A673 (cell line): ENCODE measurements at regions of chr12 and their contacts with region 1.

Region 1: GRCh38 chr12:66066137-66066928 is 64.2 kb downstream of the LLPH start:
- DNase-seq: peak; percentile 99
- H3K4me3 ChIP-seq: no peak overlapping the region
- H3K27ac ChIP-seq: peak overlapping the region; percentile 99
- H3K4me1 ChIP-seq: peaks cover 60% of the 10 kb centered on the region
- H3K27me3 ChIP-seq: no peaks in the 10 kb centered on the region
- CTCF ChIP-seq: peak; percentile 42

Region 2: DNA sequence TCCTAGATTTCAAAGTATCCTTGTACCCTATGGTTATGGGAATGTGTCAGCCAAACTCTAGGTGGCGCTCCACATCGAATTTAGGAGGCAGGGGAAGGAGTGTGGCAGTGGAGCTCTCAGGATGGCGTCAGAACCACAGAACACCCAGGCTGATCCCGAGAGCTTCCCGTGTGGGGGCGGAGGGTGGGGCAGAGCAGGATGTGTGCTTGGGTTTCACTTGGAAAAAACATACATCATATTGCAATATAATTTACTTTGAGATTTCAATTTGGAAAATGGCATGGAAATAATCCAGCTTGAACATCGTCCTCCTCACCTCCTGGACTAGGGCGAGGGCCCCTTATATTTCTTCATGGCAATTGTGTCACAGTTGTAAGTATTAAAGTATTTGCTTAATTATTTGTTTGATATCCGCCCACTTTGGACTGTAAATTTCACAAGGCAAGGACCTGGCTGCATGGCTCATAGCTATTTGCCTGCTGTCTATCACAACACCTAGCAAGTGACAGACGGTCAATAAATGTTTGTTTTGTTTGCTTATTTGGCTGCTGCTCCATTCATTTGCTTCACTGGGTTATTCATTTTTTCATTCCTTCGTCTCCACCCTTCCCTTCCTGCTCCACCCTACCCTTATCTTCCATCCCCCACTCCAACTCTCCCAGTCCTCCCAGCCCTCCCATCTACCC is 463.6 kb before region 1 on chr12:
- CTCF ChIA-PET with region 1: no interaction called
- POLR2A ChIA-PET with region 1: no interaction called
- intact Hi-C with region 1: loop called (anchors 2 kb)
- DNase-seq: peak; percentile 92
- H3K4me3 ChIP-seq: peak overlapping the region; percentile 36
- H3K27ac ChIP-seq: no peak overlapping the region
- H3K4me1 ChIP-seq: peaks cover 31% of the 10 kb centered on the region
- H3K27me3 ChIP-seq: no peaks in the 10 kb centered on the region
- CTCF ChIP-seq: peak; percentile 90

Region 3: GRCh38 chr12:65823513-65824375 is 242.6 kb before region 1 on chr12:
- CTCF ChIA-PET with region 1: interaction called, 5 read pairs
- POLR2A ChIA-PET with region 1: no interaction called
- intact Hi-C with region 1: loop called (anchors 5 kb)
- DNase-seq: peak; percentile 92
- H3K4me3 ChIP-seq: peak overlapping the region; percentile 85
- H3K27ac ChIP-seq: peak overlapping the region; percentile 95
- H3K4me1 ChIP-seq: peaks cover 18% of the 10 kb centered on the region
- H3K27me3 ChIP-seq: no peaks in the 10 kb centered on the region
- CTCF ChIP-seq: no peak

Region 4: DNA sequence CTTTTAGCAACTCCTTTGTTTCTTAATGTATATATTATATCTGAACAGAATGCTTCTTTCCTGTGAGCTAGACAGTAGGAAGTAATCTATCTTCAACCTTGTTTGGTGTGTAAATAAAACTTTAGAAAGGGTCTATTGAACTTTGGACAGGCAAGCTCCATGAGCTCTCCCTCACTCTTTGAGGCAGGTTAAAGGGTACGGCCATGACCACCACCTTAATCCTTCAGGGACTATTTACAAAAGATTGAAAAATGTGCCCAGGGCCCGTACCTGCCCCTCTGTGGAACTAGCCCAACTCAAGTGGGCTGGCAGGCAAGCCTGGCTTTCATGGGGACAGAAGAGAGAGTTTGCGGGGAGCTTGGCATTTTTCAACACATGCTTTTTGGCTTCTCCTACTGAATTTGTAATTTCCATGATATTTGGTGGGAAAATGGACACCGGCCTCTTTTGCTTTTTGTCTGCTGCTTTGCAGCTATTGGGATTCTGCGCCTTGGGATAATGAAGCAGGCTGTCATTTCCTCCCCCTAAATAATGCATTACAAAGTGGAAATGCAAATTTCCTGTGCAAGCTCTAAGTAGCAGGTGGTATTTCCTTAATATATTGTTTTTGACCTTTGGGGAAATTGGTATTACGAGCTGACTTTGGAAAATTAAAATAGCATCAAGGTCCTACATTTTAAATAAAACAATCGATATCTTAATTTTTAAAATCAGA is 136.1 kb before region 1 on chr12:
- CTCF ChIA-PET with region 1: no interaction called
- POLR2A ChIA-PET with region 1: interaction called, 3 read pairs
- intact Hi-C with region 1: loop called (anchors 2 kb)
- DNase-seq: peak; percentile 92
- H3K4me3 ChIP-seq: peak overlapping the region; percentile 13
- H3K27ac ChIP-seq: peak overlapping the region; percentile 95
- H3K4me1 ChIP-seq: peaks cover 94% of the 10 kb centered on the region
- H3K27me3 ChIP-seq: no peaks in the 10 kb centered on the region
- CTCF ChIP-seq: no peak

Region 5: GRCh38 chr12:65962921-65963861 is 103.1 kb before region 1 on chr12:
- CTCF ChIA-PET with region 1: interaction called, 3 read pairs
- POLR2A ChIA-PET with region 1: interaction called, 3 read pairs
- intact Hi-C with region 1: loop called (anchors 2 kb)
- DNase-seq: peak; percentile 70
- H3K4me3 ChIP-seq: no peak overlapping the region
- H3K27ac ChIP-seq: peak overlapping the region; percentile 52
- H3K4me1 ChIP-seq: peaks cover 59% of the 10 kb centered on the region
- H3K27me3 ChIP-seq: no peaks in the 10 kb centered on the region
- CTCF ChIP-seq: peak; percentile 64

Region 6: DNA sequence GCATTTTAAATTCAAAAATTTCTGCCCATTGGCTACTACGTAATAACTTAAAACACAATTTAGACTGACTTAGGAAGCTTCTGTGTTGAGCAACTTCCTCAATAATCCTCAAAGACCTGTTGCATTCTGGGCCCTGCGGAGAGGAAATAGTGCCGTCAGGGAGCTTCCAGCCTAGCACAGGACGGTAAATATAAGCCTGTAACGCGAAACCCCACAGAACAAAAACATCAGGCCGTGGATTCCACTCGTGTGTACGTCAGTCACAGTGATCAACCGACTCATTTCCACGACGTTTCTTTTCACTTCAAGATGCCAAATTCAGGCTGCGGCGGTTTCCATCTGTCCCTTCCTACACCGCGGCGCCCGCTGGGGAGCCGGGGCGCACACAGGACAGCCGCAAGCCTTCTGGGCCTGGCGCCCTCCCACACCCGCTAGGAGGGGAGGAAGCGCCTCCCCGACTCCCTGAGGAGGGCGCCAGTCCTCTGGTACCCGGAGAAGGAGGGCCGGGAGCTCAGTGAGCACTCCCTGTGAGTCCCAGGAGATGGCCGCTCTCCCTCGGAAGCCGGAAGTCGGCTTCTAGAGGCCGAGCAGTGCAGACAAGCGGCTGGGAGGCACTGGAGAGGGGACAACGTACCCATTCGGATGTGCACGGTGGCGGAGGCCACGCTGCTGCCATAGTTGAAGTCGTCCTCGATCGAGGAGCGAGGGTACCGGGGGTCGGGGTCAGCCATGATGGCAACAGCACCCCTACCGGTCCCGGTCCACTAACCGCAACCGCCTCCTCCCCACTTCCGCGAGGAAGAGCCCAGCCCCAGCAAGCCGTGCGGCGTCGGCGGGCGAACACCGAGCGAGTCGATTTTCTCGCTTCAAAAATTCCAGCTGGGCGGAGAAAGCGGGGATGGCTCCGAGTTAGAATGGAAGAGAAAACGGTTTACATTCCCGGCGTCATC is 103.2 kb after region 1 on chr12 and contains the start of gene TMBIM4:
- CTCF ChIA-PET with region 1: no interaction called
- POLR2A ChIA-PET with region 1: interaction called, 3 read pairs
- intact Hi-C with region 1: loop called (anchors 1 kb)
- DNase-seq: peak; percentile 98
- H3K4me3 ChIP-seq: peak within 1 kb of the TSS; percentile 71
- H3K27ac ChIP-seq: peak within 1 kb of the TSS; percentile 97
- H3K4me1 ChIP-seq: peaks cover 9% of the 10 kb centered on the region
- H3K27me3 ChIP-seq: no peaks in the 10 kb centered on the region
- CTCF ChIP-seq: peak; percentile 58
- total RNA-seq, gene TMBIM4: 61.8 and 62.1 TPM in 2 replicates

Region 7: GRCh38 chr12:66636771-66637170 is 570.4 kb after region 1 on chr12:
- CTCF ChIA-PET with region 1: no interaction called
- POLR2A ChIA-PET with region 1: no interaction called
- intact Hi-C with region 1: no loop called
- DNase-seq: no peak
- H3K4me3 ChIP-seq: no peak overlapping the region
- H3K27ac ChIP-seq: no peak overlapping the region
- H3K4me1 ChIP-seq: no peaks in the 10 kb centered on the region
- H3K27me3 ChIP-seq: peaks cover 59% of the 10 kb centered on the region
- CTCF ChIP-seq: no peak